ENCODE measurements at regions of chr4 and their contacts with region 1.

Region 1: GRCh38 chr4:42489095-42489494 is 91.8 kb downstream of the SHISA3 start:
- DNase-seq: peak; percentile 29
- CTCF ChIP-seq: no peak

Region 2: DNA sequence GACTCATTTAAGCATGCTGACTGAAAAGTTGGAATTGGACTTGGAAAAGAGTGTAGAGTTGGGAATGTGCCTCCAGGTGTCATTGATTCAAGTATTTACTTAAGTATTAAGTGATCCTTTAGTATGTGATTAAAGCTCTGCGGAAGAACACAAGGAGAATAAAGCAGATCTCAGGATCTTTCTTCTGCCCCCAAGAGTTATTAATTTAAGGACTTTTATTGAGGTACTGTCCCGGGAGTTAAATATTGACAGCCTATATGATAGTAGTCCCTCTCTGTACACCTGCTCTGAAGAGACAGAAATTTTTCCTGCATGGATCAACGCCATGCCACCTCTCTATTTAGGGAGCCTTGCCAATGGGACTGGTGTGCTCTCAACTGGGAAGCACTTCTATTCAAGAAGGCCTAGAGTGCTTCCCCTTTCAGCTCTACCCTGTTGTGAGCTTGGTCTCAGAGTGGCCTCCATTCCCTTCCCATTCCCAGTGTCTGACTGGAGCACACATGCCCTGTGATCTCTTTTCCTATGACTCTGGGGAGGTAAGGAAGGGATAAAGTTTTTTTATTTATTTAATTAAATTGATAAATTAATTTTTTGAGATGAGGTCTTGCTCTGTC is 15.9 kb before region 1 on chr4:
- CTCF ChIA-PET with region 1: interaction called, 13 read pairs
- POLR2A ChIA-PET with region 1: no interaction called
- DNase-seq: no peak
- CTCF ChIP-seq: no peak

Region 3: DNA sequence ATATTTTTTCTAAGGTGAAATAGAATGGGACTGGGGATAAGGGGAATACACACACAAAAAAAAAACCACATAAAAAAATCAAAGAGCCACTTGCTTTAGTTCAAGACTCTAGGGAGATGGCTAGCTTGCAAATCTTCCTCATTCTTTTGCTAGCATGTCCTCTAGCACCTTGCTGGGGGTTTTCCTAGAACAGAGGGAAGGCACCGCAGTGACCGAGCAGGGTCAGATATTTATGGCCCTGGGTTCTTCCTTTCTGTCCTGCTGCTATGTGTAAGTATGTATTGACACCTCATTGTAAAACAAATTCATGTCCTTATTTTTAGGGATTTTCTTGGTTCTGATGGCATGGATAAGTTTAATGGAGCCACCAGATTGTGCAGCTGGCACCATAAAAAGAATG is 10.6 kb before region 1 on chr4:
- CTCF ChIA-PET with region 1: interaction called, 13 read pairs
- POLR2A ChIA-PET with region 1: no interaction called
- DNase-seq: peak; percentile 26
- CTCF ChIP-seq: no peak

Region 4: GRCh38 chr4:43391069-43391468 is 902.0 kb after region 1 on chr4:
- CTCF ChIA-PET with region 1: no interaction called
- POLR2A ChIA-PET with region 1: no interaction called
- DNase-seq: no peak
- CTCF ChIP-seq: no peak